ENCODE measurements at regions of chr6 and their contacts with region 1.

Region 1: GRCh38 chr6:105992315-105992961 is 93.7 kb upstream of the PRDM1 start:
- DNase-seq: peak; percentile 82 to 91 (median 89)
- ATAC-seq: peak; percentile 93
- H3K4me3 ChIP-seq: peak overlapping the region; percentile 89
- H3K4me3 Mint-ChIP-seq: peak overlapping the region; percentile 88 to 98 (median 92)
- H3K27ac ChIP-seq: peak overlapping the region; percentile 79
- H3K27ac Mint-ChIP-seq: peak overlapping the region; percentile 87 to 97 (median 93)
- H3K4me1 ChIP-seq: peaks cover 14 to 23% of the 10 kb centered on the region in 2 donors
- H3K4me1 Mint-ChIP-seq: peaks cover 16 to 58% (median 29%) of the 10 kb centered on the region in 7 donors
- H3K27me3 ChIP-seq: peaks cover 0 to 32% of the 10 kb centered on the region in 2 donors
- H3K27me3 Mint-ChIP-seq: peaks cover 48 to 73% (median 62%) of the 10 kb centered on the region in 5 donors

Region 2: GRCh38 chr6:105646391-105646867 is 346.0 kb before region 1 on chr6:
- CTCF ChIA-PET with region 1: no interaction called
- POLR2A ChIA-PET with region 1: no interaction called
- intact Hi-C with region 1: loop called in 1 of 2 experiments (anchors 1 kb)
- DNase-seq: peak in 1 of 9 donors; percentile 36
- ATAC-seq: peak; percentile 81
- H3K4me3 ChIP-seq: no peak overlapping the region
- H3K4me3 Mint-ChIP-seq: peak overlapping the region in 1 of 10 donors; percentile 41
- H3K27ac ChIP-seq: no peak overlapping the region
- H3K27ac Mint-ChIP-seq: peak overlapping the region in 2 of 9 donors; percentile 12 to 83
- H3K4me1 ChIP-seq: peaks cover 0 to 79% of the 10 kb centered on the region in 2 donors
- H3K4me1 Mint-ChIP-seq: peaks cover 30 to 80% (median 44%) of the 10 kb centered on the region in 7 donors
- H3K27me3 ChIP-seq: no peaks in the 10 kb centered on the region
- H3K27me3 Mint-ChIP-seq: peaks cover 0 to 5% (median 0%) of the 10 kb centered on the region in 5 donors

Region 3: GRCh38 chr6:105793130-105793529 is 199.3 kb before region 1 on chr6:
- CTCF ChIA-PET with region 1: no interaction called
- POLR2A ChIA-PET with region 1: no interaction called
- intact Hi-C with region 1: loop called in 1 of 2 experiments (anchors 2 kb)
- DNase-seq: peak in 3 of 9 donors; percentile 9 to 23 (median 15)
- ATAC-seq: peak; percentile 76
- H3K4me3 ChIP-seq: no peak overlapping the region
- H3K4me3 Mint-ChIP-seq: peak overlapping the region in 1 of 10 donors; percentile 28
- H3K27ac ChIP-seq: no peak overlapping the region
- H3K27ac Mint-ChIP-seq: peak overlapping the region in 1 of 9 donors; percentile 68
- H3K4me1 ChIP-seq: peaks cover 0 to 3% of the 10 kb centered on the region in 2 donors
- H3K4me1 Mint-ChIP-seq: peaks cover 6 to 79% (median 12%) of the 10 kb centered on the region in 7 donors
- H3K27me3 ChIP-seq: no peaks in the 10 kb centered on the region
- H3K27me3 Mint-ChIP-seq: peaks cover 0 to under 1% (median 0%) of the 10 kb centered on the region in 5 donors

Region 4: DNA sequence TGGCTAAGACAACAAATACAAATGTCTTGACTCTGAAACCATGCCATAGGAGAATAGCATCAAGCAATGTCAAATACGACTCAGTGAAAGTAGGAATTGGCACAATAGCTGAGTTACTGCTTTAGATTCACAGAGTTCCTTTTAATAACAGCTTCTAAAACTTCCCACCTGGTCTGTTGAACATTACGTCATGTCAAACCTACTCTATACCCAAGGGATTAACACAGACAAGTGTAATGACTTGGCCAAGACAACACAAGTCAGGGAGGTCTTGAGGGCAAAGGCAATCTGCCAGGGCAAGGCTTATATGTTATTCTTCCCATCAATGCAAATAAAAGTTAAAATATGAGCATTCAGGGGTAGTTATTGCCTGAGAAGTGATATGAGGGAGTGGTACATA is 171.4 kb before region 1 on chr6:
- CTCF ChIA-PET with region 1: no interaction called
- POLR2A ChIA-PET with region 1: no interaction called
- intact Hi-C with region 1: no loop called
- DNase-seq: no peak
- ATAC-seq: no peak
- H3K4me3 ChIP-seq: no peak overlapping the region
- H3K4me3 Mint-ChIP-seq: no peak overlapping the region
- H3K27ac ChIP-seq: no peak overlapping the region
- H3K27ac Mint-ChIP-seq: no peak overlapping the region
- H3K4me1 ChIP-seq: no peaks in the 10 kb centered on the region
- H3K4me1 Mint-ChIP-seq: peaks cover 0 to 26% (median 0%) of the 10 kb centered on the region in 7 donors
- H3K27me3 ChIP-seq: no peaks in the 10 kb centered on the region
- H3K27me3 Mint-ChIP-seq: peaks cover 0 to 3% (median 0%) of the 10 kb centered on the region in 5 donors

Region 5: DNA sequence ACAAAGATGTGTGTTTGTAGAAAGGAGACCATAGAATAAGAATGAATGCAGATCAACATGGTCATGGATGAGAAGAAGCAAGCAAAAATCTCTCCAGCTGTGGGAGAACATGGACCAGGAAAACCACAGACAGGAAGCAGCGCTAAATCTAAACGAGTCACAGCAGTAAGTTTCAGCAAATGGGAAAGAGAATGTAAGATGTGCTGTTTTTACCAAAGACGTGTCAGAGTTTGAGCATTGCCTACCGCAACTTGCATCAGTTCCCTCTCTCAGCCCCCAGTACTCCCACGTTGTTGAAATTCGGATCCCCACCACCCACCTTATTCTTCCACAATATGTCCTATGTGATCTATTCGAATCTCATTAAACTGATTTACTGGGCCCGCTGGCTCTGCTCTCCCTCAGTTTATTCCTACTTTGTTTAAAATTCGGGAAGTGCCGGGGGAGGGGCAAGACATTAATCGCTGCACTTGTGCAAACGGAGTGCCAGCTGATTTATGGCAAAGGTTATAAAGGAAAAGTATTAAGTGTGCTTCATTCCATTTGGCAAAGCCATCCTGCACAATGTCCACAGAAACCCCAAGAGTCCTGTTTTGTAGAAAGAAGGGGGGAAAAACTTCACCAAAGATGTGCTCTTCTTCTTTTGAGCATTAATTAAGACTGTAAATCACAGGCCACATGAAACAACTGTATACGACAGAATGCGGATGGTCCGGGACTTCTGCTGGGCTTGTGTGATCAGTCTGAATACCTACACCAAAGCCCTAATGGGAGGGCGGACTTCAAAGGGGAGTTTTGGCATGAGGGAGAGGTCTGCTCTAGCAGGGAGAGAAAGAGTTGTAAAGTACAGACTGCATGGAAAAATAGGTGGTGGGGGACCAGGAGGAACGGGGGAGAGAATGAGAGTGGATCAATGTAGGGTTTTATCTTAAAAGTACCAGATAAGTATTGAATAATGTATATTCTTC is 34.6 kb after region 1 on chr6:
- CTCF ChIA-PET with region 1: no interaction called
- POLR2A ChIA-PET with region 1: no interaction called
- intact Hi-C with region 1: no loop called
- DNase-seq: no peak
- ATAC-seq: no peak
- H3K4me3 ChIP-seq: no peak overlapping the region
- H3K4me3 Mint-ChIP-seq: peak overlapping the region in 5 of 10 donors; percentile 6 to 61 (median 40)
- H3K27ac ChIP-seq: no peak overlapping the region
- H3K27ac Mint-ChIP-seq: no peak overlapping the region
- H3K4me1 ChIP-seq: peaks cover 0 to 10% of the 10 kb centered on the region in 2 donors
- H3K4me1 Mint-ChIP-seq: peaks cover 0 to 22% (median 12%) of the 10 kb centered on the region in 7 donors
- H3K27me3 ChIP-seq: no peaks in the 10 kb centered on the region
- H3K27me3 Mint-ChIP-seq: peaks cover 0 to 27% (median 25%) of the 10 kb centered on the region in 5 donors

Region 6: DNA sequence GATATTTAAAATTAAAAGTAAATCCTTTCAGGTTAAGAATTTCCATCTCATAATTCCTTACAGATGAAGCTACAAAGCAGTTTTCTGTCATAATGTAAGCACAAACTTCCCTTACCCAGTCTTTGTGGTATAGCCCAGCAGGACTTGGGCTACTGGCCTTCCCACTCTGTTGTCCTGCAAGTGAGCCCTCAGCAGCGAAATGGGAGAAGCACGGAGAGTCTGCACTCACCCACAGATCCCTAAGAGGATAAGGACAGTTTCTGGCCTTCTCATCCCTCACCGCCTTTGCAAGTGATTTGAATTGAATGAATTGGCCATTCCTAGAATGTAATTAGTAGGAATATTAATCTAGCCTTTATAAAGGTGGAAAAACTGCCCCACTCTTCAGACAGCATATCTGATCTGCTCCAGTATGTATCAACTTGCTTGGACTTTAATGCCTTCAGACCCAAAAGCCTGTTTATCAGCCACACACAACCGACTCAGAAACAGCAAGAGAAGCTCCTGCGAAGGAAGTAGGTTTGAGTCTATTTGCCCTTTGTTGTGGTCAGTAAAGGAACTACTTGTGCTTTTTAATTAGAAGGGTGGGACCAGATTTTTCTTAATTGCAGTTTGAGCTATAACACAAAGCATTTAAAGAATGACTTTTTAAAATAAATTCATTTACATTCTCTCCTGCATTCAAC is 63.8 kb after region 1 on chr6:
- CTCF ChIA-PET with region 1: no interaction called
- POLR2A ChIA-PET with region 1: interaction called, 3 read pairs
- intact Hi-C with region 1: loop called in 1 of 2 experiments (anchors 2 kb)
- DNase-seq: peak in 7 of 9 donors; percentile 22 to 69 (median 50)
- ATAC-seq: peak; percentile 68
- H3K4me3 ChIP-seq: peak overlapping the region; percentile 26
- H3K4me3 Mint-ChIP-seq: peak overlapping the region; percentile 1 to 80 (median 58)
- H3K27ac ChIP-seq: no peak overlapping the region
- H3K27ac Mint-ChIP-seq: peak overlapping the region in 4 of 9 donors; percentile 1 to 49 (median 2)
- H3K4me1 ChIP-seq: peaks cover 19 to 22% of the 10 kb centered on the region in 2 donors
- H3K4me1 Mint-ChIP-seq: peaks cover 6 to 32% (median 29%) of the 10 kb centered on the region in 7 donors
- H3K27me3 ChIP-seq: no peaks in the 10 kb centered on the region
- H3K27me3 Mint-ChIP-seq: peaks cover 0 to 11% (median 0%) of the 10 kb centered on the region in 5 donors

Region 7: DNA sequence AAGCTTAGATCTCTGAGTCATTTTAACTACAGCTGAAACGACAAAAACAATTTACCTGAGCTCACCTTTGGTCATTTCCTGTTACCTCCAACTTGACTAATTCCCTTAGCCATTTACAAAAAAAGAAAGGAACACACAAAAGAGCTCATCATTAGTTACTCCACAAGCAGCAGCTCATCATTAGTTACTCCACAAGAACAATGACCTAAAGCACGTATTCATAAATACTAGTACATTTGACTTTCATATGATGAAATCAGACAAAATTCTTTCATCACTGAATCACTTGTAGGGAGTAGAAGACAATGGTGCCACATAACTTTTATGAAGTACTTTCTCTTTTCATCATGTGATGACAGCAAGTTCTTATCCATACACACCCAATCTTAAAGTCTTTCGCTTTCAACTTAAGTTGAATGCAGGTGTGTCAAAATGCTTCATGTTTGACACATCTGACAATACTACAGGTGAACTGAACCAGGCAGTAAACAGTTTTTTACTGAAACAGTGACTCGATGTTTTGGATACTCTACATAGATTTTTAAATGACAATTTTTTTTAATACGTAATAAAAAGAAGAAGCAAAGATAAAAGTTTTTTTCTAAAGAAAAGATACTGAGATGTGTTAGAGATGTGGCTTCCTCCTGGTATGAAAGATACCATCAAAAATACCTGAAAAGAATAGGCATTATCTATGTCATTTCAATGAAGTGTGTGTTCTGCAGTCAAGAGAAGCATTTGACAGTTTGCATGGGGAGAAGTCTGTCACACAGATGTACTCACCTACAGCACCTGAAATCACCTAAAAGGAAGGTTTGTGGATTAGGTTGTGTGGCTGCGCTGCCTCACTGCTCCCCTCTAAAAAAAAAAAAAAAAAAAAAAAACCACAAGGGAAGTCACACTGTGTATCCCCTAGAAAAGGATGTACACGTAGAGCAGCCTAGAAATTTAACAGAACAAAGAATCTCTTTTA is 202.8 kb after region 1 on chr6:
- CTCF ChIA-PET with region 1: no interaction called
- POLR2A ChIA-PET with region 1: no interaction called
- intact Hi-C with region 1: loop called (anchors 1 to 2 kb)
- DNase-seq: peak in 7 of 9 donors; percentile 43 to 70 (median 57)
- ATAC-seq: peak; percentile 81
- H3K4me3 ChIP-seq: peak overlapping the region; percentile 21
- H3K4me3 Mint-ChIP-seq: peak overlapping the region; percentile 19 to 80 (median 71)
- H3K27ac ChIP-seq: peak overlapping the region; percentile 30
- H3K27ac Mint-ChIP-seq: peak overlapping the region; percentile 64 to 91 (median 84)
- H3K4me1 ChIP-seq: peaks cover 30 to 36% of the 10 kb centered on the region in 2 donors
- H3K4me1 Mint-ChIP-seq: peaks cover 24 to 54% (median 41%) of the 10 kb centered on the region in 7 donors
- H3K27me3 ChIP-seq: no peaks in the 10 kb centered on the region
- H3K27me3 Mint-ChIP-seq: no peaks in the 10 kb centered on the region

Measured in naive thymus-derived CD4-positive, alpha-beta T cell (primary cell).